HepG2 (cell line): ENCODE measurements at regions of chr13 and their contacts with region 1.

Region 1: DNA sequence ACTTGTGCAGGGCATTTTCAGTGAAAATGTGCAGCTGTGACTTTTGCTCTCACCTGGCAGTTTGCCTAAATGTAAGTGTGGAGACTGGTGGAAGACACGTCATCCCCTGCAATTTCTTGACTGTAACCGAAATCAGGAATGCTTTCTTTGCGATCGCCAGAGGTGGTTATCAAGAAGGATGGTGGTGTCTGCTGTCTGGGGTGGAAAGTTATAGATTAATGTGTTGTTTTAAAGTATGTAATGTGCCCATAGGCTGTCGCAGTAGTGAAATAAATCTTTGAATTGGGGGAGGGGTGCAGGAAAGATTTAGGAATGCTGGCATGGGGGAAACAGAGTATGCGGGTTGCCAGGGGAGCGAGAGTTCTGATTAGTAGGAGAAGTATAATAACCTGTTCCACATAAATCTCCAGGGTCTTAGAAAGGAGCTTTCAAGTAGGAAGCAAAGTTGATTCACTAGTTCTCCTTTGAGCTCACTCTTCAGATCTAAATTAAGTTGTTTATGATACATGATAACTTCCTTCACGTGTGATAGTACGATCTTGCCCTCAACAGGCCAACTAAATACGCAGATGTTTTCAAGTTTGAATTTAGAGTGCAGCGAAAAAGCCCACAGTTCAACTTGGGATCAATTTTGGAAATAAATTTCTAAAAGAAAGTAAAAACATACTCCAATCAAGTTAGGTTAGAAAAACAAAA is 1520.0 kb upstream of the SLC10A2 start:
- DNase-seq: no peak
- ATAC-seq: no peak
- H3K4me3 ChIP-seq: no peak overlapping the region
- H3K27ac ChIP-seq: no peak overlapping the region
- H3K4me1 ChIP-seq: no peaks in the 10 kb centered on the region
- H3K27me3 ChIP-seq: no peaks in the 10 kb centered on the region
- CTCF ChIP-seq: no peak
- EP300 ChIP-seq: no peak
- POLR2A ChIP-seq: no peak
- RAD21 ChIP-seq: no peak

Region 2: GRCh38 chr13:104614380-104615145 is 28.4 kb after region 1 on chr13:
- CTCF ChIA-PET with region 1: no interaction called
- POLR2A ChIA-PET with region 1: no interaction called
- in situ Hi-C with region 1: no loop called
- intact Hi-C with region 1: loop called (anchors 1 kb)
- DNase-seq: no peak
- ATAC-seq: no peak
- H3K4me3 ChIP-seq: no peak overlapping the region
- H3K27ac ChIP-seq: no peak overlapping the region
- H3K4me1 ChIP-seq: no peaks in the 10 kb centered on the region
- H3K27me3 ChIP-seq: no peaks in the 10 kb centered on the region
- CTCF ChIP-seq: no peak
- EP300 ChIP-seq: no peak
- POLR2A ChIP-seq: no peak
- RAD21 ChIP-seq: no peak

Region 3: DNA sequence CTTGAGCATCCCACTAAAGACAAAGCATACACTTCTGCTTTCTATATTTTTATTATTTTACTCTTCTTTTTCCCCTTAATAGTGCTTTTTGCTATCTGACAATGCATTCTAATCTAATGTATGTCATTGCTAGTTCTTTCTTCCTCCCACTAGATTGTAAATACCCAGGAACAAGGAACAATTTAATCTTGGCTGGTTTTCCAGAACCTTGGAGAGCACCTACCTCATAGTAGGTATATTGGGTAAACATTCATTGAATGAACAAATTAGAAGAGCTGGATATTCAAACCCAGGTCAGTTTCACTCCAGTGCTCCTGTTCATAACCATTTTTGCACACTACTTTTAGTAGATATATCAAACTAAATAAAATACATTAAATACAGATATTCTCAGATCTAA is 97.6 kb after region 1 on chr13:
- CTCF ChIA-PET with region 1: no interaction called
- POLR2A ChIA-PET with region 1: no interaction called
- in situ Hi-C with region 1: no loop called
- intact Hi-C with region 1: no loop called
- DNase-seq: no peak
- ATAC-seq: no peak
- H3K4me3 ChIP-seq: no peak overlapping the region
- H3K27ac ChIP-seq: no peak overlapping the region
- H3K4me1 ChIP-seq: no peaks in the 10 kb centered on the region
- H3K27me3 ChIP-seq: no peaks in the 10 kb centered on the region
- CTCF ChIP-seq: no peak
- EP300 ChIP-seq: no peak
- POLR2A ChIP-seq: no peak
- RAD21 ChIP-seq: no peak

Region 4: GRCh38 chr13:105984646-105985045 is 1398.4 kb after region 1 on chr13:
- CTCF ChIA-PET with region 1: no interaction called
- POLR2A ChIA-PET with region 1: no interaction called
- in situ Hi-C with region 1: no loop called
- intact Hi-C with region 1: loop called (anchors 5 kb)
- DNase-seq: no peak
- ATAC-seq: no peak
- H3K4me3 ChIP-seq: no peak overlapping the region
- H3K27ac ChIP-seq: no peak overlapping the region
- H3K4me1 ChIP-seq: no peaks in the 10 kb centered on the region
- H3K27me3 ChIP-seq: no peaks in the 10 kb centered on the region
- CTCF ChIP-seq: no peak
- EP300 ChIP-seq: no peak
- POLR2A ChIP-seq: no peak
- RAD21 ChIP-seq: no peak